ENCODE measurements at regions of chr3 and their contacts with region 1.

Region 1: DNA sequence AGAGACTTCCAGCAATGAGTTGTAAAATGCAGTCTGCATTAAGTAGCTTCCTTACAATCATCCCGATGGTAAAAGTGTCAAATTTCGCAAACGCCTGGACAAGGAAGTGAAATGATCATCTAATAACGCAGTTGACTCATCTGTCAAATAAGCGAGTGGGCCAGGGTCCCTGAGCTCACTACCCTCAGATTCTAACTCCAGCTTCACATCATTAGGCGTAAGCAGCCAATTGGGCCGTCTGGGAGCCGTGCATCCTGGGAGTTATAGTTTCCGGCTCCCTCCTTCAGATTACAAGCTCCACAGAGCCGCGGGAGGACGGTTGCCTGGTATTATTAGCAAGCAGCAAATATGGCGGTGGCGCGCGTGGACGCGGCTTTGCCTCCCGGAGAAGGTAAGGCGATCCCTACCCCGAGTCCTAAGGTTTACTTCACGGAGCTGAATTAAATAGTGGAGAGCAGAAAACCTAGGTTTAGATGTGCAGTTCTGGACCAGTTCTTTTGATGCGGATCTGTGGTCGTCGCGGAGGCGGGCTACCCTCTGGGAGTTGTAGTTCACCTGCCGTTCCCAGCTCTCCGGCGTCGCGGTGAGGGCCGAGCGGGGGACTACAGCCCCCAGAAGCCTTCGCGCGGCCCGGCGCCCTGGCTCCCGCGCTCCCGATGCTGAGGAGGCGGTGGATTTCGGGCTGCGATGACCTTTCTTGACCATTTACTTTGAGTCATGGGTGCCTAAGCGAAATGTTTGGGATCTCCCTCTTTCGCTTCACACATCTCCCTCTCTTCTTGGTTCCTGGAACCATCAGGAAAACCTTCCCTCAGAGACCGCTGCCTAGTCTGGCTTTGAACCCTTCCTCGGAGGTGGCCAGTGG is at the start of gene CEP97:
- DNase-seq: peak; percentile 85 to 90
- H3K4me3 ChIP-seq: peak within 1 kb of the TSS; percentile 41 to 81 (median 65)
- H3K27ac ChIP-seq: peak within 1 kb of the TSS in 2 of 3 donors; percentile 19 to 86
- H3K4me1 ChIP-seq: no peaks in the 10 kb centered on the region
- H3K27me3 ChIP-seq: no peaks in the 10 kb centered on the region
- CTCF ChIP-seq: peak in 1 of 6 experiments; percentile 3
- POLR2A ChIP-seq: peak in 1 of 2 donors; percentile 40
- total RNA-seq, gene CEP97: 7.3 to 13.3 (median 8.2) TPM

Region 2: DNA sequence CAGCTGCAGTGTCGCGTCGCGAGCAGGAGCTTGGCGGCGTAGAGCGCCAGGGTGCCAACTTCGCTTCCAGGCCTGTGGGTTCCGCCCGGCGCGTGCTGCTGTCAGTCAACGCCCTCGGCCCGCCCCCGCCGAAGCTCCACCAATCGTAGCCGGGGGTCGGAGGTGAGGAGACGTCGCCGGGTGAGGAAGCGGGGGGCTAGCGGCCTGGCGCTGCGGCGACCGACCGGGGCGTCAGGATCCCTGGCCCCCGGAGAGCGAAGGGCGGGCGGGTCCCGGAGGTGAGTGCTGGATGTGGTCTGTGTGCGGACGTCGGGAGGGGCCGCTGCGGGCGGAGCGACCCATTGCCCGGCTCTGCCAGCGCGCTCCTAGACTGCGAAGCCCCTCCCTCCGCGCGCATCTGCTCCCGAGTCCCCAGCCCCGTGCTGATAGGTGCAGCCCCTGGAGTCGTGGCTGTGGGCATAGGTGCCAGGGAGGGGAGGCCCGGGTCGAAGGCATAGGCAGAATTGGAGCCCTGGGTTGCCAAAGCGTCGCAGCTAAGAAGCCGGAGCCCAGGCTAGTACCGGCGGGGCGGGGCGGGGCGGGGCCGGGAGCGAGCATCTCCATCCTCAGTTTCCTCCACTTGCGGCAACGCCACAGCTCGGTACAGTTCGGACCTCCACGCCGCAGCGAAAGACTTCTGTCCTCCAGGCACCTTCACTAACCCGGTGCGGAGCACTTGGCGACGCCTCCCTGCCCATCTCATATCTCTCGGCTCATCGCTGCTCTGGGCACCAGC is 54.7 kb after region 1 on chr3 and contains the start of gene NXPE3:
- intact Hi-C with region 1: loop called (anchors 10 kb)
- DNase-seq: peak; percentile 91
- H3K4me3 ChIP-seq: peak within 1 kb of the TSS; percentile 87 to 94 (median 88)
- H3K27ac ChIP-seq: peak within 1 kb of the TSS; percentile 34 to 90 (median 58)
- H3K4me1 ChIP-seq: peaks cover 6 to 8% of the 10 kb centered on the region in 2 donors
- H3K27me3 ChIP-seq: no peaks in the 10 kb centered on the region
- CTCF ChIP-seq: no peak
- POLR2A ChIP-seq: peak in 1 of 2 donors; percentile 65
- total RNA-seq, gene NXPE3: 10.5 to 18.9 (median 13.2) TPM

Region 3: DNA sequence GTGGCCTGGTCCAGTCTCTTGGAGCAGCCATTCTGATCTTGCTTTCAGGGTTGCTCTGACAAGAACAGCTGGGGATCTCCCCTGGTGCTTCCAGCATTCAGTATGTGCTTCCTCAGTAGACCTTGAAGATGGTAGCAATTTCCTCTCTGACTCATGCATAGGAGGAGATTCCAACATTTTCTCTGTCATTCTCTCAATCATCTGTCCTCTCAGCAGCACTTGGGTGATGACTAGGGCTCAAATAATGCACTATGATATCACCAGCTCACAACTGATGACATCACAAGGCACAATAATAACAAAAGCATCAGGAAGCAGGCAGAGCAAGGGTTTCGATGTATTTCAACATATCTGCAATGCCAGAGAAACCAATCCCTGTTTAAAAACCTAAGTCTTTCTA is 177.5 kb after region 1 on chr3:
- intact Hi-C with region 1: no loop called
- DNase-seq: no peak
- H3K4me3 ChIP-seq: no peak overlapping the region
- H3K27ac ChIP-seq: no peak overlapping the region
- H3K4me1 ChIP-seq: no peaks in the 10 kb centered on the region
- H3K27me3 ChIP-seq: no peaks in the 10 kb centered on the region
- CTCF ChIP-seq: no peak
- POLR2A ChIP-seq: no peak